Dorsolateral prefrontal cortex (tissue), 120 donors: ENCODE measurements at regions of chr20 and their contacts with region 1.

Region 1: DNA sequence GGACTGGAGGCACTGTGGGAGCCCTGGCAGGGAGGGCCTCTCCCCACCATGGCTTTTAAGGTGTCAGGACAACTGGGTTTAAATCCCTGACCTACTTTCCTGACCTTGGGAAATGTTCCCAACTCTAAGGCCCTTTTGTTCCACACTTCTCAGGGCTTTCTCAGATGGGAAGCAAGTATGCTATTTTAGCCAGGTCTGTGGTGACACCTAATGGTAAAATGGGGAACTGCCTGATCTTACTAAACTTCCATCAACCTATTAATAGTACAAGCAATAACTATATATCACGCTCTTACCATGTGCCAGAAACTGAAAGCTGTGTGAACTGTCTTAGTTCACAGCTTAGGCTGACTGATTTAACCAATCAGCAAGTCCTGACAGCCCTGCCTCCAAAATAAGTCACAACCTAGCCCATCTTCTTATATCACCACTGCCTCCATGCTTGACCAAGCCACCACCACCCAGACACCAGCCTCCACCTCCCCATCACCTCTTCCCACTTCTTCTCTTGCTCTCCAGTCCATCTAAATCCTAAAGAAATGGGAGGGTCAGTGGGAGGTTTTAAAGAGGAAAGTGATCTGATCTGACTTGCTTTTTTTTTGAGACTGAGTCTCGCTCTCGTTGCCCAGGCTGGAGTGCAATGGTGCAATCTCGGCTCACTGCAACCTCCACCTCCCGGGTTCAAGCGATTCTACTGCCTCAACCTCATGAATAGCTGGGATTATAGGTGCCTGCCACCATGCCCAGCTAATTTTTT is 6.9 kb upstream of the BLCAP start:
- DNase-seq: peak in 3 of 10 donors; percentile 14 to 63 (median 48)
- H3K4me3 ChIP-seq: no peak overlapping the region
- H3K27ac ChIP-seq: peak overlapping the region in 1 of 59 donors; percentile 11
- H3K27me3 ChIP-seq: no peaks in the 10 kb centered on the region
- CTCF ChIP-seq: peak; percentile 84 to 98 (median 92)

Region 2: GRCh38 chr20:37178839-37179670 is 355.5 kb before region 1 on chr20 and contains the starts of genes MROH8 and RPN2:
- intact Hi-C with region 1: loop called in 1 of 2 experiments (anchors 5 kb)
- DNase-seq: peak; percentile 98 to 99 (median 99)
- H3K4me3 ChIP-seq: peak within 1 kb of the TSS; percentile 67 to 97 (median 87)
- H3K27ac ChIP-seq: peak within 1 kb of the TSS; percentile 40 to 100 (median 98)
- H3K27me3 ChIP-seq: no peaks in the 10 kb centered on the region
- CTCF ChIP-seq: peak in 23 of 56 donors; percentile 9 to 49 (median 25)
- total RNA-seq, gene MROH8: 4.9 to 20.6 (median 11.6) TPM
- total RNA-seq, gene RPN2: 51.0 to 98.1 (median 63.8) TPM

Region 3: GRCh38 chr20:37265152-37265551 is 269.4 kb before region 1 on chr20:
- intact Hi-C with region 1: loop called (anchors 1 to 5 kb)
- DNase-seq: no peak
- H3K4me3 ChIP-seq: no peak overlapping the region
- H3K27ac ChIP-seq: no peak overlapping the region
- H3K27me3 ChIP-seq: peaks cover 0 to 4% (median 0%) of the 10 kb centered on the region in 45 donors
- CTCF ChIP-seq: no peak

Region 4: DNA sequence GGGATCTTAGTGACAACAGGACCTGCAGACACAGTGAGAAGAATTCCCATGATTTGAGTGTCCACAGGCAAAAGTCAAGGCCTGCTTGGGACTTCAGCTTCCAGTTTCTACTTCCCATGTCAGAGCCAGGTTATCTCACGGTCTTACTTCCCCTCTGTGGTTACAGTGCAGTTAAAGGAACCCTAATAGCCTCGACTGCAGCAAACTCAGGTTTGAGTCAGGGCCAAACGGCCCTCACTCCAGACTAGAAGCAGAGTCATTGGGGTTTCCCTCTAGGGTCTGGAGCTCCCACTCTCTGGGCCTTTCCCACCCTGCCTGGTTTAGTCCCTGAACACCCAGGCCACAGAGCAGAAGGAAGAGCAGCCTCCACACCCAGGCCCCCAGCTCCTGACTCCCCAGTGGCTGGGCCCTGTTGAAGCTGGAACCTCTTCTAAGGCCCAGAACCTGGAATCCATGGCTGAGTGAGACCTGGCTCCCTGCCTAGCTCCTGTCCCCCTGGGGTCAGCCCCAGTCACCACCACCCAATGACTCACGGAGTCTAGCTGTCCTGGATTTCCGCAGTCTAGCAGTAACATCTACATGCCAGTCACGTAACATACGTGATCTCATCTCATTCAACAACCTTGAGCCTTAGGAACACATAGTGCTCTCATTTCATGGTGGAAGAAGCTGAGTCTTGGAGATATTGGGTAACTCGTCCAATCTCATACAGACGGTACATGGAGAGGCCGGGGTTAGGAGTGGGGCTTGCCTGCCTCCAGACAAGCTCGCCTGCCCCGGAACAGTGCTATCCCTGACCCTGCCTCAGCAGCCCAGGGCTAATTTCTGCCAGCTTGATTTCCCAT is 263.8 kb before region 1 on chr20:
- intact Hi-C with region 1: loop called (anchors 1 to 5 kb)
- DNase-seq: no peak
- H3K4me3 ChIP-seq: no peak overlapping the region
- H3K27ac ChIP-seq: peak overlapping the region in 5 of 59 donors; percentile 13 to 44 (median 20)
- H3K27me3 ChIP-seq: no peaks in the 10 kb centered on the region
- CTCF ChIP-seq: no peak

Region 5: DNA sequence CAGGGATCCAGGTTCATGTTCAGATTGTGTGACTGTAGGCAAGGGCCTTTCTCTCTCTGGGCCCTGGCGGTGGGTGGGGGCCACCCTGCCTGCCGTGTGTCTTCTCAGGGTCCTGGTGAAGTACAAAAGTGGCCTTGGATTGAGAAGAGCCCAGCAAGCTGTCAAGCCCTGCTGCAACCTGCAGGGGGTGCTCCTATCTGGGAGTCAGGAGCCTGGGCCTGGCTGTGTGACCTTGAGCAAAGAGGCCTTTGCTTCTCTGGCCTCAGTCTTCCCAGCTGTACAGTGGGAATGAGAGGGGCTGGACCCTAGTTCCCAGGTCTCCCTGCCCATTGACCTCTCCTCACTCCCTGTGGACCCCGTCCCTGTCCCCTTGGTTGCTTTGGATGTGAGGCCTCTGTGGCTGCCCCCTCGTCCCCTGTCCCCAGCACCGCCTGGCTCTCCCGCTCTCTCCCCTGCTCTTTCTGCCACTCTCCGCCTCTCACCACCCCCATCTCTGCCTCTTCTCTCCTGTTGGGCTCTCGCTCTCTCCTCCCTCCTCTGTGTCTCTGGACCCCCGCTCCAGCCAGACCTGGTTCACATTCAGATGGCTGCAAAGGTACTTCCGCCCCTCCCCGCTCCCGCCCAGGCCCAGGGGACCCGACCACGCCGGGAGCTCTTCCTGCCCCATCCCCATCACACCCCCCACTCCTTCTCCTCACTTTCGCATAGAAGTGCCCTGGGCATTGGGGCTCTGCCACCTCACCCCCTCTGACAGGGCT is 142.0 kb before region 1 on chr20:
- intact Hi-C with region 1: loop called (anchors 5 kb)
- DNase-seq: peak in 1 of 10 donors; percentile 37
- H3K4me3 ChIP-seq: no peak overlapping the region
- H3K27ac ChIP-seq: no peak overlapping the region
- H3K27me3 ChIP-seq: no peaks in the 10 kb centered on the region
- CTCF ChIP-seq: peak in 9 of 56 donors; percentile 6 to 31 (median 17)

Region 6: GRCh38 chr20:37615340-37616109 is 80.9 kb after region 1 on chr20:
- intact Hi-C with region 1: no loop called
- DNase-seq: peak in 1 of 10 donors; percentile 9
- H3K4me3 ChIP-seq: no peak overlapping the region
- H3K27ac ChIP-seq: no peak overlapping the region
- H3K27me3 ChIP-seq: peaks cover 0 to 11% (median 0%) of the 10 kb centered on the region in 45 donors
- CTCF ChIP-seq: peak in 41 of 56 donors; percentile 17 to 72 (median 46)

Region 7: DNA sequence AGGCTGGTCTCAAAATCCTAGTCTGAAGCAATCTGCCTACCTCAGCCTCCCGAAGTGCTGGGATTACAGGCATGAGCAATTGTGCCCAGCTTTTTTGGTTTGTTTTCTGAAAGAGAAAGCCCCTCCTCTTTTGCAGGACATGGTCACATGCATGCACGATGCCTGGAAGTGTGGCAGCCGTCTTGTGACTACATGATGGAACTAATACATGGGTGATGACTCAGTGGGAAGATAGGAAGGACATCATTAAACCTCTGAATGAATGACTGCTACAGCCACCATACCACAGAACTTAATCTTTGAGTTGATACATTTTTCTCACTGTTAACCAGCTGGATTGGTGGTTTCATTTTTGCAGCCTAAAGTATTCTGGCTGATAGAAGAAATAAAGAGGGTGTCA is 145.8 kb after region 1 on chr20:
- intact Hi-C with region 1: no loop called
- DNase-seq: no peak
- H3K4me3 ChIP-seq: no peak overlapping the region
- H3K27ac ChIP-seq: no peak overlapping the region
- H3K27me3 ChIP-seq: peaks cover 0 to 9% (median 0%) of the 10 kb centered on the region in 45 donors
- CTCF ChIP-seq: no peak